Activated CD4-positive, alpha-beta memory T cell treated with anti-CD3 and anti-CD28 coated beads, Interleukin-2, amount 10 ng/mL, durations not matched to agents 7 days and 5 days (primary cell): ENCODE measurements at regions of chr22 and their contacts with region 1.

Region 1: GRCh38 chr22:24423519-24424000 is 3.8 kb upstream of the ADORA2A start:
- DNase-seq: peak; percentile 68
- H3K4me3 Mint-ChIP-seq: peak overlapping the region; percentile 68
- H3K27ac Mint-ChIP-seq: no peak overlapping the region
- H3K4me1 Mint-ChIP-seq: peaks cover 40% of the 10 kb centered on the region
- H3K27me3 Mint-ChIP-seq: peaks cover 16% of the 10 kb centered on the region

Region 2: GRCh38 chr22:24333301-24333700 is 90.3 kb before region 1 on chr22:
- CTCF ChIA-PET with region 1: no interaction called
- POLR2A ChIA-PET with region 1: no interaction called
- DNase-seq: no peak
- H3K4me3 Mint-ChIP-seq: no peak overlapping the region
- H3K27ac Mint-ChIP-seq: no peak overlapping the region
- H3K4me1 Mint-ChIP-seq: peaks cover 26% of the 10 kb centered on the region
- H3K27me3 Mint-ChIP-seq: no peaks in the 10 kb centered on the region

Region 3: GRCh38 chr22:24433813-24434470 is 10.4 kb after region 1 on chr22:
- CTCF ChIA-PET with region 1: interaction called, 16 read pairs
- POLR2A ChIA-PET with region 1: interaction called, 22 read pairs
- DNase-seq: peak; percentile 61
- H3K4me3 Mint-ChIP-seq: peak overlapping the region; percentile 19
- H3K27ac Mint-ChIP-seq: peak overlapping the region; percentile 92
- H3K4me1 Mint-ChIP-seq: peaks cover 79% of the 10 kb centered on the region
- H3K27me3 Mint-ChIP-seq: no peaks in the 10 kb centered on the region

Region 4: GRCh38 chr22:24503137-24503842 is 79.7 kb after region 1 on chr22:
- CTCF ChIA-PET with region 1: interaction called, 30 read pairs
- POLR2A ChIA-PET with region 1: interaction called, 4 read pairs
- DNase-seq: peak; percentile 66
- H3K4me3 Mint-ChIP-seq: no peak overlapping the region
- H3K27ac Mint-ChIP-seq: no peak overlapping the region
- H3K4me1 Mint-ChIP-seq: peaks cover 16% of the 10 kb centered on the region
- H3K27me3 Mint-ChIP-seq: peaks cover 3% of the 10 kb centered on the region

Region 5: DNA sequence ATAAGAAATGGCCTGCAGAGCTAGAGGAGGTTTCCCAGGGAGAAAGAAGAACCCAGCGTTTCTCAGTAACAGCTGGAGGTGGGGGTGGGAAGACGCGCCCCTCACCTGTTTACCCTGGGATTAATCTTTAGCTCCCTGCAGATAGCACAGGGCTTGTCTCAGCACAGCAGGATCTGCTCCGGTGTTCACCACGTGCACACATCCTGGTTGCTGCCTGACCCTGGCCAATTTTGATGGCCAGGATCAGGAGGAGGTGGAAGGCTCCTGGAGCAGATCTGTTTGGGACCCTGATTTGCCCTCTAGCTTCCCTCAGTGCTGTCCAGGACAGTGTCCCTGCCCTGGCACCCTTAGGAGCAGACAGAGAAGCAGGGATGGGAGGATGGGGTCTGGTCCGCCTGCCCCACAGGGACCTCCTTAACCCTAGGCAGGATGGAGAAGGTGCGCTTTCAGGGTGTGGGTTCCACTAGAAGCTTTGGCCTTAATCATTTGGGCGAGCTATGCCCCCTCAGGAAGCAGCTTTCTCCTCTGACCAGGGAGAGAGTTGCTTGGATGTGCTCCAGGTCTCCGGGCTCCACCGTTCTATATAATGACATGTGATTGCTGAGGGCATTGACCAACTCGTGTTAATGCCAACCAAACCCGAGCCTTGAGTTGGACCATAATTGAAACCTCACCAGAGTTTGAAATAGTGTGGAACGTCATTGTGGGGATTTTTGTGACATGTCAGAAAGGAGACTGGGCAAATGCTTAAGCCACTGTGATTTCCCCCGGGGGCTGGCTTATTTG is 90.9 kb after region 1 on chr22:
- CTCF ChIA-PET with region 1: no interaction called
- POLR2A ChIA-PET with region 1: no interaction called
- DNase-seq: no peak
- H3K4me3 Mint-ChIP-seq: no peak overlapping the region
- H3K27ac Mint-ChIP-seq: no peak overlapping the region
- H3K4me1 Mint-ChIP-seq: peaks cover 16% of the 10 kb centered on the region
- H3K27me3 Mint-ChIP-seq: peaks cover 16% of the 10 kb centered on the region

Region 6: DNA sequence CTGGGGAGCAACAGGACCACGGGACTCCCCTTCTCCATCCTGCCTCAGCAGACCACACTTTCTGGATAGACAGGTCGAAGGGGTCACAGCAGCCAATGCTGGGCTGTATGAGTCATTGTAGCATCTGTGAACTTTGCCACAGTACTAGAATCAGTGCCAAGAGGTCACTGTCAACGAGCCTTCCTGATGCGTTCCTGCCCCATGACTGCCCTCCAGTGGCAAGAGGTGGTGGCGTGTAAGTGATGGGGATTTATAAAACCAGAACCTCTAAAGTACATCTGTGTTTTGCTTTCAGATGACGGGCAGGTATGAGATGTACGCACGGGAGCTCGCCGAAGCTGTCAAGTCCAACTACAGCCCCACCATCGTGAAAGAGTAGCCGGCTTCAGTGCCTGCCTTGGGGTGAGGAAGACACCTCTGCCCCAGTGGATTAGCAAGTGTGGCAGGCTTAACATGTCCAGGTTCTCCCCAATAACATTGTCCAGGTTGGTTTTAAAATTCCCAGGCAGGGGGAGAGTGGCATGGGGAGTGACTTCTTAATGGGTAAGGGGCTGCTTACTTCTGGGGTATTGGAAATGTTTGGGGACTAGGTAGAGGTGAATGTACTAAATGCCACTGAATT is 102.0 kb after region 1 on chr22:
- CTCF ChIA-PET with region 1: interaction called, 36 read pairs
- POLR2A ChIA-PET with region 1: interaction called, 5 read pairs
- DNase-seq: peak; percentile 90
- H3K4me3 Mint-ChIP-seq: no peak overlapping the region
- H3K27ac Mint-ChIP-seq: no peak overlapping the region
- H3K4me1 Mint-ChIP-seq: peaks cover 17% of the 10 kb centered on the region
- H3K27me3 Mint-ChIP-seq: peaks cover 5% of the 10 kb centered on the region

Region 7: GRCh38 chr22:24751518-24751917 is 328.0 kb after region 1 on chr22:
- CTCF ChIA-PET with region 1: no interaction called
- POLR2A ChIA-PET with region 1: no interaction called
- DNase-seq: no peak
- H3K4me3 Mint-ChIP-seq: no peak overlapping the region
- H3K27ac Mint-ChIP-seq: no peak overlapping the region
- H3K4me1 Mint-ChIP-seq: no peaks in the 10 kb centered on the region
- H3K27me3 Mint-ChIP-seq: peaks cover 56% of the 10 kb centered on the region